SK-N-SH (cell line): ENCODE measurements at regions of chr5 and their contacts with region 1.

Region 1: GRCh38 chr5:150573867-150574817 is 66.2 kb downstream of the NDST1 start:
- DNase-seq: peak; percentile 59
- H3K4me3 ChIP-seq: no peak overlapping the region
- H3K27ac ChIP-seq: peak overlapping the region in 1 of 2 experiments; percentile 99; a peak in 2 of 4 replicates
- H3K4me1 ChIP-seq: peaks cover 8 to 61% of the 10 kb centered on the region in 2 experiments; a peak in 3 of 4 replicates
- H3K27me3 ChIP-seq: no peaks in the 10 kb centered on the region
- CTCF ChIP-seq: peak; percentile 30
- EP300 ChIP-seq: no peak
- RAD21 ChIP-seq: no peak

Region 2: GRCh38 chr5:150589871-150590601 is 15.9 kb after region 1 on chr5:
- CTCF ChIA-PET with region 1: interaction called, 9 read pairs
- POLR2A ChIA-PET with region 1: interaction called, 14 read pairs
- DNase-seq: peak; percentile 58
- H3K4me3 ChIP-seq: no peak overlapping the region
- H3K27ac ChIP-seq: peak overlapping the region; percentile 41 to 93
- H3K4me1 ChIP-seq: peaks cover 11 to 68% of the 10 kb centered on the region in 2 experiments; a peak in 3 of 4 replicates
- H3K27me3 ChIP-seq: no peaks in the 10 kb centered on the region
- CTCF ChIP-seq: peak; percentile 54
- EP300 ChIP-seq: peak in 1 of 2 experiments; percentile 3; a peak in 1 of 4 replicates
- RAD21 ChIP-seq: peak; percentile 59